BJ (cell line): ENCODE measurements at regions of chr12 and their contacts with region 1.

Region 1: GRCh38 chr12:106136263-106136662 is 2.5 kb downstream of the NUAK1 start:
- DNase-seq: peak; percentile 62
- H3K4me3 ChIP-seq: peak overlapping the region; percentile 85
- H3K27me3 ChIP-seq: no peaks in the 10 kb centered on the region
- CTCF ChIP-seq: peak; percentile 75

Region 2: DNA sequence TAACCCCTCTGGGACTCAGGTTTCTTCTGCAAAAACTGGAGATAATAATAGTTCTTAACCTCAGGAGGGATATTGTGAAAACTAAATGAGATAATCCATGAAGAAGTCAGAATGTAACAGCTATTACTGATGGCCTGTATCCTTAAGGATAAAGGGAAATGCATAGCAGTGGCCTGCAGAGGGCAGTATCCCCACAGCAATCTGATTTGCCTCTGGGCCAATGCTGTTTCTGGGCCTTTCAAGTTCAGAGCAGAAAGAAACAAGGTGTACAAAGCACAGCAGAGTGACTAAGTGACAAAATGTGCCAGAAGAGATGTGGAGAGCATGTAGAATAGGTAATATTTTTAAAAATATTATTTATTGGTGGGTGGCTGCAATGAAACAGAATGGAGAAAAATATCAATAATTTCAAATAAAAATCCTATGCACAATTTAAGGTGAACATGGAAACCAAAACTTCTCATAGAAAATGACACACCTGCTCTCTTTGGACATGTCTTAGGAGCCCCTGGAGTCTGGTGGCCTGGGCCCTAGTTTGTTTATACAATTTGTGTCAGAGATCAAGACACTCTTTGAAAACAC is 715.5 kb before region 1 on chr12:
- CTCF ChIA-PET with region 1: interaction called, 57 read pairs
- POLR2A ChIA-PET with region 1: no interaction called
- DNase-seq: no peak
- H3K4me3 ChIP-seq: no peak overlapping the region
- H3K27me3 ChIP-seq: no peaks in the 10 kb centered on the region
- CTCF ChIP-seq: peak; percentile 84

Region 3: DNA sequence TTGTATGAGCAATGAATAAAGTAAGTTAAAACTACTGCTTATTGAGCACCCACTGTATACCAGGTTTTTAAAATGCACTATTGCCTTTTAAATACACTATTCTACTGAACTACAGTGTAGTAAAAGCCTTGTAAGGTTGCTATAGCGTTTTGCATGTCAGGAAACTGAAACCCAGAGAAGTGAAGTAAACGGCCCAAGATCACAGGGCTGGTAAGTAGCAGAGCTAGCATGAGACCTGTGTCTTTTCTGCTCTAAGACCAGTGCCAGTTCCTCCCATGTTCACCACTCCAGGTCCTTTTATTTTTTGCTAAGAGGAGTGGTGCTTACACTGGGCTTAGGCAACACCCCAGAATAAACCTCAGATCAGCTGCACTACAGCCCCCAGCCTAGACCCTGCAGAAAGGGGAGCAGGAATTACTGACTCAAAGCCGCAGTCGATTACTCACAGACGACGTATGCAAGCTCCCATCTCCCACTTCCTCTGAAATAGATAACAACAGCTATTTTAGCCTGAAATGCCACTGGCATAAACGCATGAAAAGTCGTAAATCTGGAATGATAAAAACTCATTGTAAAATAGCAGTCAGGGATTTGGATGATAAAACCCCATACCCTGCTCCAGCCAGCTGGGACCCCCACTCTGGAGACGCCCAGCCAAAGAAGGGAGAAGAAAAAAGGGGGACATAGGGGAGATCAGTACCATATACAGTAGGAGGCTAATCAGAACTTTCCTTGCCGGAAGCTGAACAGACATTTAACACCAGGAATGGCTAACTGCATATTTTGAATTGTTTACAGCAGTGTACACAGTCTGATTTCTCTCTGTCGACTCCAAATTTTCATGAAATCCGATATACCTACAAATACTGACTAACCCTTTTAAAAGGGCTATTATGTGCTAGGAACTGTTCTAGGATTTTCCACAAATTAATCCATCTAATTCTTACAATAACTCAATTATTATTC is 105.8 kb before region 1 on chr12:
- CTCF ChIA-PET with region 1: interaction called, 17 read pairs
- POLR2A ChIA-PET with region 1: interaction called, 4 read pairs
- DNase-seq: peak; percentile 92
- H3K4me3 ChIP-seq: no peak overlapping the region
- H3K27me3 ChIP-seq: no peaks in the 10 kb centered on the region
- CTCF ChIP-seq: no peak

Region 4: DNA sequence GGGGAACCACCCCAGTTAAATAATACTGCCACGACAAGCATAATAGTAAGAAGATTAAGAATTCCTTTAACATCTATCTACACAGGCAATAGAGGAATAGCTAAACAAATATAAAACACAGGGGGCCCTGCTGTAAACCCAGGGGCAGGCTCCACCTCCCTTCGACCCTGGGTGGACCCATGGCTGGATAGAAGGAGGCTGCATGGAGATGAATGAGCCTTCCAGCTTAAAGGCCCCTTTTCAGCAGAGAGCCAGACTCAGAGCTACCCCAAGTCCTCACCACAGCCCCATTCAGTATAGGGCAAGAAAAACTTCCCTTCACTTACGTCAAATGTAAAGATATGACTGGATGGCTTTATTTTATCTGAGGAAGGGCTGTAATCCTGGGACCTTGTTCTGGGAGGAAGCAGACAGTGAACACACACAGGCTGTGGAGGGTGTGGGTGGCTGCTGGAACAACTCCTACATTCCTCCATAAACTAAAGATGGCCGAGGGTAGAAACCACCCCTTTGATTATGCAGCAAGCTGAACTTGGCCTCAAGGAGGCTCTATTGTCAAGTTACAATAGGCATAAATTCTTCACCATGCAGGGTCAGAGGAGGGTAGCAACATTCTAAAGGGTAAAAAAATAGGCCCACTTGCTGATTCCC is 28.0 kb before region 1 on chr12:
- CTCF ChIA-PET with region 1: interaction called, 21 read pairs
- POLR2A ChIA-PET with region 1: no interaction called
- DNase-seq: no peak
- H3K4me3 ChIP-seq: no peak overlapping the region
- H3K27me3 ChIP-seq: no peaks in the 10 kb centered on the region
- CTCF ChIP-seq: peak; percentile 25; the same call in 1 of the 2 replicates

Region 5: GRCh38 chr12:106149096-106149784 is 13.0 kb after region 1 on chr12:
- CTCF ChIA-PET with region 1: interaction called, 39 read pairs
- POLR2A ChIA-PET with region 1: no interaction called
- DNase-seq: no peak
- H3K4me3 ChIP-seq: no peak overlapping the region
- H3K27me3 ChIP-seq: no peaks in the 10 kb centered on the region
- CTCF ChIP-seq: peak; percentile 75

Region 6: GRCh38 chr12:106238152-106238551 is 101.9 kb after region 1 on chr12:
- CTCF ChIA-PET with region 1: no interaction called
- POLR2A ChIA-PET with region 1: interaction called, 12 read pairs
- DNase-seq: no peak
- H3K4me3 ChIP-seq: no peak overlapping the region
- H3K27me3 ChIP-seq: no peaks in the 10 kb centered on the region
- CTCF ChIP-seq: no peak